Posterior vena cava (tissue), 2 donors: ENCODE measurements at regions of chr15 and their contacts with region 1.

Region 1: DNA sequence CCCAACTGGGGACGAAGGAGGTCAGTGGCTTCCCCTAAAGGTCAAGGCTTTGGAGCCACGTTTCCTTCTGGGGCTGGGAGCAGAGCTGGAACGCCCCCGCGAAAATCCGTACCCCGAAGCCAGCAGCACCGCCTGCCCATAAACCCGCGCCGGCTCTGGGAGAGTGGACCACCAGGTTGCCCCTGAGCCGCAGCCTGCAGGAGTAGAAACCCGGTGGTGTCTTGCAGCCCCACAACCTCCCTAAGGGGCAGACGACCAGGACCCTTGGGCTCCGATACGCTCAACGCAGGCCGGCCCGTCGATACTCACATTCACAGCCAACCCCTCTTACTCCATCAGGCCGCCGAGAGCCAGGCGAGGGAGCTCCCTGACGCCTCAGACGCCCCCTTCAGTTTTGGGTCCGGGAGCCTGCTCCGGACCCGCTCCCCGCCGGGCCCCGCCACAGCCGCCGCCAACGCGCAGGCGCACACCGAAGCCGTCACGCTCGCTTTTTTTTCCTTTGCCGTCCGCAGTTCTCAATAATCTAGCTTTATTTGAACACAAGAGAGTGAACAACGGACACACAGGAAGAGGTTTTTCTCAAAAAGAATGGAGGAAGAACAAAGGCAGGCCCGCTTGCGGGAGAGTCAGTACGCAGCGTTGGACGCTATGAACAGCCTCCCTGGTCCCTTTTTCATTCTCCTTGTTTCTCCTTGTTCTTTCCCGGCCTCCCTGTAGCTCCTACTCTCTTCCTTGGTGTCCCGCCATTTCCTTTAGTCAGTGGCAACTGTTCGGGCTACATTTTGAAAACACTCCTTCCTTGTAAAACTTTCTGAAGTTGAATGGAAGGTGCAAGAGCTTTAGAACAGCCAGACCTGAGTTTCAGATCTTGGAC is at the start of gene ZNF106:
- DNase-seq: peak; percentile 96
- total RNA-seq, gene ZNF106: 70.1 to 84.2 TPM

Region 2: DNA sequence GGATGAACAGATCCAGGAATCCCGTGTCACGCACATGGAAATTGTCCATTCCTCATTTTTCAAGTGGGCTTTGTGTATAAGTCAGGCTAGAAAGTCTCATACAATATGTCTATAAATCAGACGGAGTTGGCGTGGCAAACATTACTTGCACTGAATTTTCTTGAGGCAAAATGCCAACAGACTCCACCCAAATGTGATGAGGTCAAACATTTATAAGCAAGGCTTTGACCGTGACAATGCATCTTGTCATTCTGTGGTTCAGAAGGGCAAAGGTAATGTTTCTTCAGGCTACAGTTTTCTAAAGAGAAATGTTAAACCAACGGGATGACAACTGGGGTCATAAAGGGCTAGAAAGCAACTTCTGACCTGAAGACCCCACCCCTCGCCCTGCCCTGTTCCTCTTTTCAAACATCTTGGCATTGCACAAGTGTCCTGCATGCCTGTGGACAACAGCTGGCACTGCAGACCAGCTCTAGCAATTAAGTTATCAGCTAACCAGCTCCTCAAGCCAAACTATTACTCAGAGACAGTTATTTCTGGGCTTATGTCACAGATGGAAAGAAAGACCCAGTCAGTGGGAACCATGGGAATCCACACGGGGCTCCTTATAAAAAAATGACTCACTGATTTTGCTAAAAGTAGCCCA is 560.6 kb before region 1 on chr15:
- intact Hi-C with region 1: loop called in 1 of 2 experiments (anchors 5 kb)
- DNase-seq: peak; percentile 90

Region 3: GRCh38 chr15:42808913-42809312 is 318.0 kb after region 1 on chr15:
- intact Hi-C with region 1: no loop called
- DNase-seq: no peak